ENCODE measurements at regions of chr14 and their contacts with region 1.

Region 1: DNA sequence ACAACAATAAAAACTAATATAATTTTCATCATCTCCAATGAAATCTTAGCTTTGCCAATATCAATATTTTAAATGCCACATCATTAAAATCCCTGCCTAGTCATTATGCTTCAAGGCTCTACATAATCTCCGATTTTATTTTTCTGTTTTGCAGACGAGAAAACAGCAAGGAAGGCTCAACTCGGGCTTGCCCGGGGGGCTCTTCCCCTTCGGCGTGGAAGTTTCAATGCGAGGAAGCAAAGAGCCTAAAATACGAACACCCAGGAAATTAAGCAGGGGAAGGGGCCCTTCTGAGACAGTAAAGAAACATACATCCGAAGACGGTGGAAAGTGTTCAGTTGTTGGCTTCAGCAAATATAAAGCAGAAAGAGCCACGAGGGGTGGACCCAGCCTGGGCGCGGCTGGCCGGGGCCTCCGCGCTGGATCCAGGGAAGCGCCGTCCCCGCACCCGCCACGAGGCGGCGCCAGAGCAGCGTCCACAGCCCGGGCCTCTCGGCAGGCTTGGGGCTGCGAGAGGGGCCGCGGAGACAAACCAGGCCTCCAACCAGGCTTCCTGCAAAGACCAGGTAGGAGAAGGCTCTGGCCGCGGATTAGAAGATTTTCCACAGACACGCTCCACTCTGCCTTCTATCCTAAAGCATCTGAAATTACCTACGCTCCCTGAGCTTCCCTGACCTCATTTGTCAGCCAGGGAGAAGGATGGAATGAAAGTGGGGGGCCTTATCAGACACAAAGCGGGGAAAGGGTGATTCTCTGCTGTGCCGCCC is 77.2 kb downstream of the SERPINA3 start:
- DNase-seq: peak; percentile 72
- H3K4me3 ChIP-seq: peak overlapping the region; percentile 79
- H3K27ac ChIP-seq: no peak overlapping the region
- H3K4me1 ChIP-seq: no peaks in the 10 kb centered on the region
- H3K27me3 ChIP-seq: no peaks in the 10 kb centered on the region

Region 2: GRCh38 chr14:95098984-95099599 is 409.7 kb after region 1 on chr14:
- in situ Hi-C with region 1: loop called (anchors 10 kb)
- DNase-seq: peak; percentile 88
- H3K4me3 ChIP-seq: no peak overlapping the region
- H3K27ac ChIP-seq: no peak overlapping the region
- H3K4me1 ChIP-seq: peaks cover 36% of the 10 kb centered on the region
- H3K27me3 ChIP-seq: no peaks in the 10 kb centered on the region

Region 3: DNA sequence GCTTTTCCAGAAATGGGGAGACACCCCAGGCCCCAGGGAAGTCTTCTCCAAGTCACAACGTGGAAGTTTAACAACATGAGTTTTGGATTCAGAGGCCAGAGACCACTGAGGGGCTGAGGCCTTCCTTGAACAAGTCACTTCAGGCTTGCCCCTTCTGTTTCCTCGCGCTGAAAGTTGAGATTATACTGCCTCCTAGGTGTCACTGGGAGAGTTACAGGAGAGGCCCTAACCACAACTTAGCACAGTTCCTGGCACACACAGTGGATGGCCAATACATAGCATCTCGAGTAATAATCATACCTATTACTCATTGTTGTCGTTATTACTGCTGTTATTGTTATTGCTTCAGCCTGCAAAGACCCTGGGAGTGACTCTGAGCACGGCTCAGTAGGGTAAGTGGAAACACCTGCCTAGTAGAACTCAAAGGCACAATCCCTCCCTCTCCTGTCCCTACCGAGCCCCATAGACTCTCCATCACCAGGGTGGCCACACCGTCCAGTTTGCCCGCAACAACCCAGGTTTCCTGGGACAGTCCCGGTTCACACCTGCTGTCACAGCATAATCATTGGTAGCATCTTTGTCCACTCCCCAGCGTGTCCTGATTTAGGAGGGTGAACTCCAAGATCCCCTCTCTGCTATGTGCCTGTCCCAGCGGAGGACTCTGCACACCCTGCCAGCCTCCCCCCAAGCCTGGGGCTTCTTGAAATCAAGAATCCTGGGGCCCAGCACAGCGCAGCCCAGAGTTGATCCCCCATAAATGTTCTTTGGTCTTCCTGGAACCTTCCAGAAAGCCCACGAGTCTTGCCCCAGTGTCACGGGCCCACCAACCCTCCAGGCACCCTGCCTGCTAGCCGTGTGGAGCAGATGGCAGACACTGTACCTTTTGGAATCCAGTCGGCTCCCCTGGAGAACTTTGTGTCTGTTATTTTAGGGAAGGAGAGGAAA is 742.1 kb after region 1 on chr14:
- in situ Hi-C with region 1: loop called (anchors 10 kb)
- DNase-seq: peak; percentile 50
- H3K4me3 ChIP-seq: no peak overlapping the region
- H3K27ac ChIP-seq: no peak overlapping the region
- H3K4me1 ChIP-seq: no peaks in the 10 kb centered on the region
- H3K27me3 ChIP-seq: no peaks in the 10 kb centered on the region

Measured in GM23248 (cell line).